ENCODE measurements at regions of chr3 and their contacts with region 1.

Region 1: DNA sequence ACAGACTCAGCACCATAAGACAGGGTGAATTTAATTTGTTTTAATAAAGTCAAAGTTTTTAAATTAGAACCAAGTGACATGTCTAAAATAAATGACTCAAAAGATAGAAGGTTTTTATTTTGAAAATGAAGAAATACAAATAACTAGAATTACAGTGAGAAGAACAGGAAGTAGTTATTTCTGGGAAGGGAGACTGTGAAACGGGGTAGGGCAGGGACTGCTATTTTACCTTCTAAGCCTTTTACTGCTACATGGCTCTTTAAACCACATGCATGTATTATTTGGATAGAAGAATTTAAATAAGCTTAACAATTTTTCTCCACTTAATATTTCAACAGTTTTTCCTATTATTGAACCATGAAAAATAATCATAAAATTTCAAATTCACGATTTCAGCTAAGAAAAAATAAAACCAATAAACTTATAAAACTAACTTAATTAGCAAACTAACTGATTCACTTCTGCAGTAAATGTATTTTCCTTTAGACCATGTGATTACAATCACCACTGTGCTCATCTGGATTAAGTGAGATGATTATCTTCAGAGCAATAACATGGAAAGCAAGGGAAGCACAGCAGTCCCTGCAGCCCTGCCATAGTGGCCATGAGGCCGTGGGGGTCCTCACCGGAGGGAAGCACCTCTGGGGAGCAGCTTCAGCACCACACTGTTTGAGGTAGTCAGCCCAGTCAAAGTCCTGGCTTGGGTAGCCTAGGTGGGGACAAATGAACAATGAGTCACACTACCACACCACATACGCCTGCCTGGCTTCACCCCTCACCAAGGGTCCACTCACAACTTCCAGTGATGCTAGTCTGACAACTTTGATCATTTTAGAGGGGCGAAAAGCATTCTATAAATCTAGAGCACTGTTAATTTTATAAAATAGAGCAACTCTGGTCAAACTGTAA is 28.3 kb upstream of the STIMATE start:
- DNase-seq: no peak
- H3K4me3 ChIP-seq: no peak overlapping the region
- H3K27ac ChIP-seq: no peak overlapping the region
- H3K4me1 ChIP-seq: no peaks in the 10 kb centered on the region
- H3K27me3 ChIP-seq: no peaks in the 10 kb centered on the region
- CTCF ChIP-seq: no peak

Region 2: DNA sequence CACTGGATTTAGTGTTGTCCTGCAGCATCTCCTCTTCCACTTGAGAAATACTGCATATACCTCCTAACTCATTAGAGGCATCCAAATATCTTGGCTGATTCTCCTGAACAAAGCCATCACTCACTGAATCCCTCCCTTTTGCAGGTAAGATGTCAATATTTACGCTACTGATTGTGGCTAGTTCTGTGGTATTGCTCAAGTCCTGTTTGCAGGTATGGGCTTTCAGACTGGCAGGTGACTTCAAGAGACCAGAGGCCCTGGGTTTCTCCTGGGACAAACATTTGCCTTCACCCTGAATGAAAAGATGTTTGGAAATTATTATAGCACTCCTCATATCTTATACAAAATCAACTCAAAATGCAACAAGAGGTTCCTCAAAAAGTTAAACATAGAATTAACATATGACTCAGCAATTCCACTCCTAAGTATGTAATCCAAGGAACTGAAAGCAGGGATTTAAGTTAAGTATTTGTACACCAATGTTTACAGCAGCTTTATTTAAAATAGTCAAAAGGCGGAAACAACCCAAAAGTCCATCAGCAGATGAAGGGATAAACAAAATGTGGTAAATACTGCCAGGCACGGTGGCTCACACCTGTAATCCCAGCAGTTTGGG is 173.5 kb before region 1 on chr3:
- intact Hi-C with region 1: loop called (anchors 10 kb)
- DNase-seq: no peak
- H3K4me3 ChIP-seq: no peak overlapping the region
- H3K27ac ChIP-seq: no peak overlapping the region
- H3K4me1 ChIP-seq: no peaks in the 10 kb centered on the region
- H3K27me3 ChIP-seq: no peaks in the 10 kb centered on the region
- CTCF ChIP-seq: no peak